Breast epithelium (tissue), 4 donors: ENCODE measurements at regions of chr13 and their contacts with region 1.

Region 1: GRCh38 chr13:96934889-96935489 is 59.3 kb downstream of the OXGR1 start:
- DNase-seq: no peak
- H3K4me3 ChIP-seq: no peak overlapping the region
- H3K27ac ChIP-seq: no peak overlapping the region
- H3K4me1 ChIP-seq: no peaks in the 10 kb centered on the region
- H3K27me3 ChIP-seq: no peaks in the 10 kb centered on the region
- CTCF ChIP-seq: no peak
- POLR2A ChIP-seq: no peak

Region 2: DNA sequence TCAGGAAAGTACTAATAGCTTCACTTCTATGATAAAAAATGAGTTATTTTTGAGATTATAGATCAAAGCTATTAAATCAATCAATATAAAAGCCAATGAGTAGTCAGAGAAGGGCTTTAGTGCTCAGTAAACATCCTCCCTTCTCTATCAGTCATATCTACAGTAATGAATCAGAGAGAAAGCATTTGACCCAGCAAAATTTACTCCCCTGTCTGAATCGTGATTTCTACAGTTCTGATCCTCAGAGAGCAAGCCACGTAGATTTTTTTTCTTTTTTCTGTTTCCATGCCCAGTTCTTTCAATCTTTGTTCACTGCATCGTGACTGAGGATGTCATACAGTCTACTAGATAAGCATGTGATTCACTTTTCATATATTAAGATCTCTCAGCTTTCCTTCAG is 271.0 kb after region 1 on chr13:
- intact Hi-C with region 1: loop called (anchors 10 kb)
- DNase-seq: no peak
- H3K4me3 ChIP-seq: no peak overlapping the region
- H3K27ac ChIP-seq: no peak overlapping the region
- H3K4me1 ChIP-seq: no peaks in the 10 kb centered on the region
- H3K27me3 ChIP-seq: no peaks in the 10 kb centered on the region
- CTCF ChIP-seq: no peak
- POLR2A ChIP-seq: no peak

Region 3: DNA sequence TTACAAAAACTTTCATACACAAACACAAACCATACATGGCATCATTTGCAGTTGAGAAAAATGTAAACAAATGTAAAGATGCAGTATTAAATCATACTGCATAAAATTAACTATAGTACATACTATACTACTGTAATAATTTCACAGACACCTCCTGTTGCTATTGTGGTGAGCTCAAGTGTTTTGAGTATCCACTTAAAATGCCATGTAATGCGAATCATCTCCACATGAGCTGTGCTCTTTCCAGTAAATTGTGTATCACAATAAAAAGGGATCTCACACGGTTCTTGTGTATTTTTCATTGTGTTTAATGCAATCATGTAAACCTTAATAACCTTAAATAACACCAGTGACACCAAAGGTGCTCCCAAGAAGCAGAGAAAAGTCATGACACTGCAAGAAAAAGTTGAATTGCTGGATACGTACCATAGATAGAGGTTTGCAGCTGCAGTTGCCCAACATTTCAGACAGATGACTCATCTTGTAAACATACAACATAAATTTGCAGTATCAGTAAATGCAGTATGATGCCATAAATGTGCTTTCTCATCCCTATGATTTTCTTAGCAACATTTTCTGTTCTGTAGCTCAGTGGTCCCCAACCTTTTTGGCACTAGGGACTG is 665.6 kb after region 1 on chr13:
- intact Hi-C with region 1: no loop called
- DNase-seq: no peak
- H3K4me3 ChIP-seq: no peak overlapping the region
- H3K27ac ChIP-seq: no peak overlapping the region
- H3K4me1 ChIP-seq: no peaks in the 10 kb centered on the region
- H3K27me3 ChIP-seq: no peaks in the 10 kb centered on the region
- CTCF ChIP-seq: no peak
- POLR2A ChIP-seq: no peak